Posterior vena cava (tissue), 2 donors: ENCODE measurements at regions of chr7 and their contacts with region 1.

Region 1: GRCh38 chr7:95840953-95841950 is 68.9 kb downstream of the DYNC1I1 start:
- DNase-seq: no peak

Region 2: GRCh38 chr7:95772298-95772770 is 68.9 kb before region 1 on chr7 and contains the start of gene DYNC1I1:
- intact Hi-C with region 1: loop called in 1 of 2 experiments (anchors 10 kb)
- DNase-seq: peak; percentile 89
- total RNA-seq, gene DYNC1I1: 15.8 to 17.9 TPM

Region 3: DNA sequence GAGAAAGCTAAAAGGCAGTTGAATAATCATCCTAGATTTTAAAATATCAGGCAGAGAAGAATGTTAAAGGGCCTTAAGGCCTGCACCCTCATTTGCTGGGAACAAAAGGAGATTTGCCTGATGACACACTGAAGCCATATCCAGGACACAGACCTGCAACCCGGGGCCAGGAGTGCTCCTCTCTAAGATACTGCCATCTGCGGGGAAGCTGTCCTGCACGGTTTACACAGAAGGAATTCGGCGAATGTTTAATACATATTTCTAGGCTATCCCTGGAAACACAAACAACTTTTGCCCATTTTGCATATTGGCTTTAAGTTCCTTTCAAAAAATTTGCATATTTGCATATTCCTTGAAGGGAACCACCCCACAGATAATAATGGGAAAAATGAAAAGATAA is 16.6 kb before region 1 on chr7:
- intact Hi-C with region 1: no loop called
- DNase-seq: no peak

Region 4: DNA sequence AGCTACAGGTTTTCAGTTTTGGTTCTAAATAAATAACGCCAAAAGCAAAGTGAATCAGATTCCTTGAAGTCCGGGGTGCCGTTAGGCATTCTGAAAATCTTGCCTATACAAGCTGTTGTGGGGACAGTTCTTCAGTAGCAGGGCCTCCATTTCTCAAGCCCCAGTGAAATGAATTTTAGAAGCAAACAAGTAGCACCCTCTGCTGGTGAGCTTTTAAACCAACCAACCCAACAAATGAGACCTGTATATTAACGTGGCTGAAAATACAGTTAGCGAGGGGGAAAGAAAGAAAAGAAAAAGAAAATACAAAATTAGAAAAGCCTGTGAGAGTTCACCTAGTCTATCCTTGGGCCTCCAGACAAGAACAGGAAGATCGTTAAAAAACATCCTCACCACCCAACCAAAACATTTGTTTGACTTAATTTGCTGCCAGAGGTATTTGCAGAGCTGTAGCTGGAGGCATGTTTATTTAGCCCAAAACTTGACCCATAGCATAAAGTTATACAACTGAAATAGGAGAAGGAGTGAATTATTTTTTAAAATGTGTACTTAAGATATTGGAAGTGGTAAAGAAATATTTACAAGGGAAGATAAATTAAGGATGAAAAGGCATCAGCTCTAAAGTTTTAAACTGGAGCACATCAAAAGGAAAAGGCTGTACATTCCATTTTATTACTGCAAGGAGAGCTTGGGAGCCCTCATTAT is 30.0 kb after region 1 on chr7:
- intact Hi-C with region 1: no loop called
- DNase-seq: no peak